GM12878 (cell line): ENCODE measurements at regions of chr12 and their contacts with region 1.

Region 1: DNA sequence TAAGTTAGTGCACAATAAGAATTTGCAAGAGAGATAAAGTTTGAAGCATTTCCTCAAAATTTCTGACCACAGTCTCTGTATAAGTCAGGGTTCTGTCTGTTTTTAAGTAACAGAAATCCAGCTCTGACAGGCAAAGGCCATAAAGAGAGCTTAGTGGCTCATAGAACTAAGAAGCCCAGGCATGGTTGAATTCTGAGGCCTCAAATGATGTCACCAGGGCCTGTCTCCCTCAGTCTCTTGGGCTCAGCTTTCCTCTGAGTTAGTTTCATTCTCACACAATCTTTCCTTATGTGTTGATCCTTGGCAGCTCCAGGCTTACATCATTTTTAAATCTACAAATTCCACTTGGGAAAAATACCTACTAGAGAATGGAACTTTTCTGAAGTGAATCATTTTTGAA is 173.4 kb upstream of the ATP2B1 start:
- DNase-seq: peak; percentile 55
- ATAC-seq: peak; percentile 80
- H3K4me3 ChIP-seq: no peak overlapping the region
- H3K27ac ChIP-seq: peak overlapping the region; percentile 99
- H3K4me1 ChIP-seq: peaks cover 40% of the 10 kb centered on the region
- H3K27me3 ChIP-seq: no peaks in the 10 kb centered on the region
- CTCF ChIP-seq: no peak
- EP300 ChIP-seq: peak; percentile 60 to 64; a peak in 2 of 4 replicates
- POLR2A ChIP-seq: no peak
- RAD21 ChIP-seq: peak; percentile 20; the same call in 1 of the 2 replicates

Region 2: DNA sequence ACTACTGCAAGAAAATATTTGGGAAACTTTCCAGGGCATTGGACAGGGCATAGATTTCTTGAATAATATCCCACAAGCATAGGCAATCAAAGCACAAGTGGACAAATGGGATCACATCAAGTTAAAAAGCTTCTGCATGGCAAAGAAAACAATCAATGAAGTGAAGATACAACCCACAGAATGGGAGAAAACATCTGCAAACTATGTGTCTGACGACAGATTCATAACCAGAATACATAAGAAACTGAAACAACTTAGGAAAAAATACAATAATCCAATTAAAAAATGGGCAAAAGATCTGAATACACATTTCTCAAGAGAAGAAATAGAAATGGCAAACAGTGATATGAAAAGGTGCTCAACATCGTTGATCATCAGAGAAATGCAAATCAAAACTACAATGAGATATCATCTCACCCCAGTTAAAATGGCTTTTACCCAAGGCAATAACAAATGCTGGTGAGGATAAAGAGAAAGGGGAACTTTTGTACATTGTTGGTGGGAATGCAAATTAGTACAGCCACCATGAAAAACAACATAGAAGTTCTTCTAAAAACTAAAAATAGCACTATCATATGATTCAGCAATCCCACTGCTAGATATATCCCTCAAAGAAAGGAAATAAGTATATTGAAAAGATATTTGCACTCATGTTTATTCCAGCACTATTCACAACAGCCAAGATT is 139.6 kb before region 1 on chr12:
- CTCF ChIA-PET with region 1: no interaction called
- POLR2A ChIA-PET with region 1: no interaction called
- RAD21 ChIA-PET with region 1: no interaction called
- SMC1A ChIA-PET with region 1: no interaction called
- in situ Hi-C with region 1: no loop called
- intact Hi-C with region 1: no loop called
- DNase-seq: no peak
- ATAC-seq: peak; percentile 51
- H3K4me3 ChIP-seq: no peak overlapping the region
- H3K27ac ChIP-seq: no peak overlapping the region
- H3K4me1 ChIP-seq: no peaks in the 10 kb centered on the region
- H3K27me3 ChIP-seq: no peaks in the 10 kb centered on the region
- CTCF ChIP-seq: no peak
- EP300 ChIP-seq: no peak
- POLR2A ChIP-seq: no peak
- RAD21 ChIP-seq: no peak

Region 3: DNA sequence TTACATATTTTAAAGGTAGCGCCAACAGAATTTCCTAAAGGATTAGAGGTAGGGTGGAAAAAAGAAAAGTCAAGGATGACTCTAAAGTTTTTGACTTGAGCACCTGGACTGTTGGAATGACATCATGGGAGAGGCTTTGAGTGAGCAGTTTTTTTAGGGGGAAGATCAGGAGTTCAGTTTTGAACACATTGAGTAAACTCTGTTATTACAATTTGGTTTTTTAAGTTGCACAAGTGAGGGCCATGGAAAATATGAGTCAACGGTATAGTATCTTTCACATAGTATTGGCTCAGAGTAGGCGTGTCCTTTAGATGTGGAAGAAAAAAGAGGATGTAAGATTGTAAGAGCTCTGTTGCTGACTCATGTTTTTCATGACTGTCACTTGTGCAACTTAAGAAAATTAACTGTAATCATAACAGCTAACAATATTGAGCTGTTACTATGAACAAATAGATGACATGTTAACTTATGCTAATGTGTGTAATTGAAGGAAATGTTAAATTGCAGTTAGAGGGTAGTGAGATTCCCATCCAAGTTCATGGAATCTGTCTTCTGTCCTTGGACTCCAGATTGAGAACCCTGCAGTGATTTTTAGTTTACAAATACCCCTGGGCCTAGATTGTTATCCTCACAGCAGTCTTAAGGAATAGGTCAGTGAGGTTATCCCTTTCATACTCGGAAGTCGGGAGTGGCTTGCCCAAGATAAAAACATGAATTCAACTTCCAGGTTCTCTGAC is 125.3 kb before region 1 on chr12:
- CTCF ChIA-PET with region 1: interaction called, 4 read pairs
- POLR2A ChIA-PET with region 1: interaction called, 3 read pairs
- RAD21 ChIA-PET with region 1: interaction called, 6 read pairs
- SMC1A ChIA-PET with region 1: interaction called, 7 read pairs
- in situ Hi-C with region 1: no loop called
- intact Hi-C with region 1: loop called (anchors 1 kb)
- DNase-seq: peak; percentile 97
- ATAC-seq: peak; percentile 89
- H3K4me3 ChIP-seq: no peak overlapping the region
- H3K27ac ChIP-seq: peak overlapping the region; percentile 90
- H3K4me1 ChIP-seq: peaks cover 44% of the 10 kb centered on the region
- H3K27me3 ChIP-seq: no peaks in the 10 kb centered on the region
- CTCF ChIP-seq: no peak
- EP300 ChIP-seq: peak; percentile 97 to 98
- POLR2A ChIP-seq: no peak
- RAD21 ChIP-seq: no peak

Region 4: DNA sequence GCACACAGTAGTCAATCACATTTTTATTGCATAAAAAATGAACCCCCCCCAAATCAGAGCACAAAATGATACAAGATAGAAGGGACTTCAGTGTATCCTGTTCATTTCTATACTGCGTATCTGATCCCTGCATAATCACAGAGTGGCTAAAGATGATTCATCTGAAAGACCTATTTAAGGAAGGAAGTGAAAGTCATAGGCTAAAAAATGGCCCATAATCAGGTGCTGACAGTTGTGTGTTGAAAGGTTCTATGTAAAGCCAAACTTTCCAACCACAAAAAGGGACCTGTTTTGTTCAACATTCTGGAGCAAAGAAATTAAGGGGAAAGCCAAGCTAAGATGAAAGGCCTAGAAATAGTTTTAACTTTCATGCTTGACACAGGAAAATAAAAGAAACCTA is 25.6 kb before region 1 on chr12:
- CTCF ChIA-PET with region 1: interaction called, 3 read pairs
- POLR2A ChIA-PET with region 1: interaction called, 5 read pairs
- RAD21 ChIA-PET with region 1: interaction called, 20 read pairs
- SMC1A ChIA-PET with region 1: interaction called, 26 read pairs
- in situ Hi-C with region 1: no loop called
- intact Hi-C with region 1: no loop called
- DNase-seq: peak; percentile 85
- ATAC-seq: peak; percentile 90
- H3K4me3 ChIP-seq: no peak overlapping the region
- H3K27ac ChIP-seq: peak overlapping the region; percentile 42
- H3K4me1 ChIP-seq: peaks cover 43% of the 10 kb centered on the region
- H3K27me3 ChIP-seq: no peaks in the 10 kb centered on the region
- CTCF ChIP-seq: no peak
- EP300 ChIP-seq: peak; percentile 97
- POLR2A ChIP-seq: no peak
- RAD21 ChIP-seq: peak; percentile 27; the same call in 1 of the 2 replicates

Region 5: GRCh38 chr12:89893972-89894706 is 12.1 kb after region 1 on chr12:
- CTCF ChIA-PET with region 1: interaction called, 3 read pairs
- POLR2A ChIA-PET with region 1: interaction called, 6 read pairs
- RAD21 ChIA-PET with region 1: no interaction called
- SMC1A ChIA-PET with region 1: interaction called, 15 read pairs
- in situ Hi-C with region 1: no loop called
- intact Hi-C with region 1: no loop called
- DNase-seq: no peak
- ATAC-seq: peak; percentile 61
- H3K4me3 ChIP-seq: no peak overlapping the region
- H3K27ac ChIP-seq: no peak overlapping the region
- H3K4me1 ChIP-seq: no peaks in the 10 kb centered on the region
- H3K27me3 ChIP-seq: no peaks in the 10 kb centered on the region
- CTCF ChIP-seq: no peak
- EP300 ChIP-seq: no peak
- POLR2A ChIP-seq: no peak
- RAD21 ChIP-seq: no peak

Region 6: GRCh38 chr12:89918181-89918868 is 36.3 kb after region 1 on chr12:
- CTCF ChIA-PET with region 1: no interaction called
- POLR2A ChIA-PET with region 1: interaction called, 3 read pairs
- RAD21 ChIA-PET with region 1: interaction called, 8 read pairs
- SMC1A ChIA-PET with region 1: interaction called, 45 read pairs
- in situ Hi-C with region 1: loop called (anchors 5 kb)
- intact Hi-C with region 1: no loop called
- DNase-seq: no peak
- ATAC-seq: no peak
- H3K4me3 ChIP-seq: no peak overlapping the region
- H3K27ac ChIP-seq: no peak overlapping the region
- H3K4me1 ChIP-seq: no peaks in the 10 kb centered on the region
- H3K27me3 ChIP-seq: no peaks in the 10 kb centered on the region
- CTCF ChIP-seq: no peak
- EP300 ChIP-seq: no peak
- POLR2A ChIP-seq: no peak
- RAD21 ChIP-seq: no peak

Region 7: DNA sequence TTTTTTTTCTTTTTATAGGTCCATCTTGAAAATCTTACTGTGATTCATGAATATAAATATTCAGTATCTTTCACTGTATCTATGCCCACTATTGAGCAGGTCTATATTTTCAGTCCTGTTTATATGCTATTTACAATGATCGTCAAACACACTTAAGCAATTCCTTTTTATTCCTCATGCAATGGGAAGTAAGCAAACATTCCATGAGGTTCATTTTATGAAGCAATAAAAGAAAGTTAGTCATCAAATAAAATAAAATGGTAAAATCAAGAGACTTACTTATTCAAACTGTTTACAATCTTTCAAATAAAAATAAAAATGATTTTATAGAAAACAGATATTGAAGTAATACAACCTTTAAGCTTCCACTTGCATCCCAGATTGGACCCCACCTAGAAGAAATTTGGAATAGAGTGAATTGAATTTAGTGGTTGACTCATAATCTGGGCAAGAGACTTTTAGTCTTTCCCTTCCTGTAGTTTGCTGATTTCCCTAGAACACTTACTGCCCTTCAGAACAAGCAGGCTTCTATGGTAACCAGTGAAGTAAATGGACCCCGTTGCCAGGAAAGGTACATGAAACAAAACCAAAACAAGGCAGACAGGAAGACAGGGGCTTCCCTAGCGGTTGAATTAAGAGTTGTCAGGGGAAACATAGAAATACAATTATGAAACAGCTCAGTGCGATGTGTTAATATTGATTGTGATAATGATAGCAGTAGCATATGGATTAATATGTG is 67.6 kb after region 1 on chr12:
- CTCF ChIA-PET with region 1: interaction called, 3 read pairs
- POLR2A ChIA-PET with region 1: interaction called, 3 read pairs
- RAD21 ChIA-PET with region 1: interaction called, 28 read pairs
- SMC1A ChIA-PET with region 1: interaction called, 16 read pairs
- in situ Hi-C with region 1: no loop called
- intact Hi-C with region 1: loop called (anchors 1 kb)
- DNase-seq: peak; percentile 83
- ATAC-seq: peak; percentile 87
- H3K4me3 ChIP-seq: peak overlapping the region; percentile 33; the same call in 1 of the 2 replicates
- H3K27ac ChIP-seq: peak overlapping the region; percentile 83; the same call in 1 of the 2 replicates
- H3K4me1 ChIP-seq: peaks cover 15% of the 10 kb centered on the region; the same call in 1 of the 2 replicates
- H3K27me3 ChIP-seq: no peaks in the 10 kb centered on the region
- CTCF ChIP-seq: peak; percentile 31 to 63 (median 35); a peak in 5 of 6 replicates
- EP300 ChIP-seq: peak; percentile 86 to 96; a peak in 3 of 4 replicates
- POLR2A ChIP-seq: no peak
- RAD21 ChIP-seq: peak; percentile 71

Region 8: DNA sequence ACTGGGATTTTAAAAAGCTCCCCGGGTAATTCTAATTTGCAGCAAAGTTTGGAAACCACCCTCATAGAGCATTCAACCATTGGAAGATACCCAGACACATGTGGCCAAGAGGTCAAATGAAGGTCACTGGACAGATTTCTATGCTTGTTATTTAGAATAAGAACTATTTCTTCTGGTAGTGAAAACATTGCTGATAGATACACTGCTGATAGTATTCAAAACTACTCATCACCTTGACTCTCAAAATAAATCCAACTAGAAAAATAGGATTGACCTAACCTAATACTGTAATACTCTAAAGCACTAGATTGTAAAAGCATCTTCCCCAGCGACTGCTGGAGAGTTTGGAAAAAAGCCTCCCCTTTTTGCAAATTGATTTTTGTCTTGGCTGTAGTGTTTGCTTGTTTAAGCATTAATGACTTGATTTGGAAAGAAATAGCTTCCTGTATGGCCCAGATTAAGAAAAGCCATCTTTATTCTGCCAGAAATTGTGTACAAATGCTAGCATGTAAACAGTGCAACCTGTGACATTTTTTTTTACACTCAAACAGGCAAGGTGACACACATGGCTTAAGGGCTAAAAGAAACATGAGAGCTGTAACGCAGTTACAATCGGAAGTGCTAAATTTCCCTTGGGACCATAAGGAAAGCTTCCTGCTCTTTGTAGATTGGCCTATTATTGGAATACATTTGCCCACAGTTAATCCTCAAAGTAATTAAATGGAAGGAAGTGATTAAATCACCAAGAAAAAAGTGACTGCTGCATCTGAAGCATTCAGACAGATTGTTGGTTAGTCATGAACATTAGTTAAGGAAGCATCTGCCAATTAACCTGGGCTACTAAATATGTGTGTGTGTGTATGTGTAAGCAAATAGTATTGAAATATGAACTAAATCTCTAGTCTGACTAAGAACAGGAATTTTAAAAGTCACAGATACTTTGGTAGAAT is 183.1 kb after region 1 on chr12:
- CTCF ChIA-PET with region 1: no interaction called
- POLR2A ChIA-PET with region 1: no interaction called
- RAD21 ChIA-PET with region 1: no interaction called
- SMC1A ChIA-PET with region 1: no interaction called
- in situ Hi-C with region 1: no loop called
- intact Hi-C with region 1: loop called (anchors 5 kb)
- DNase-seq: no peak
- ATAC-seq: peak; percentile 71
- H3K4me3 ChIP-seq: no peak overlapping the region
- H3K27ac ChIP-seq: no peak overlapping the region
- H3K4me1 ChIP-seq: no peaks in the 10 kb centered on the region
- H3K27me3 ChIP-seq: no peaks in the 10 kb centered on the region
- CTCF ChIP-seq: no peak
- EP300 ChIP-seq: no peak
- POLR2A ChIP-seq: no peak
- RAD21 ChIP-seq: no peak